CD4-positive, alpha-beta memory T cell (primary cell): ENCODE measurements at regions of chr17 and their contacts with region 1.

Region 1: DNA sequence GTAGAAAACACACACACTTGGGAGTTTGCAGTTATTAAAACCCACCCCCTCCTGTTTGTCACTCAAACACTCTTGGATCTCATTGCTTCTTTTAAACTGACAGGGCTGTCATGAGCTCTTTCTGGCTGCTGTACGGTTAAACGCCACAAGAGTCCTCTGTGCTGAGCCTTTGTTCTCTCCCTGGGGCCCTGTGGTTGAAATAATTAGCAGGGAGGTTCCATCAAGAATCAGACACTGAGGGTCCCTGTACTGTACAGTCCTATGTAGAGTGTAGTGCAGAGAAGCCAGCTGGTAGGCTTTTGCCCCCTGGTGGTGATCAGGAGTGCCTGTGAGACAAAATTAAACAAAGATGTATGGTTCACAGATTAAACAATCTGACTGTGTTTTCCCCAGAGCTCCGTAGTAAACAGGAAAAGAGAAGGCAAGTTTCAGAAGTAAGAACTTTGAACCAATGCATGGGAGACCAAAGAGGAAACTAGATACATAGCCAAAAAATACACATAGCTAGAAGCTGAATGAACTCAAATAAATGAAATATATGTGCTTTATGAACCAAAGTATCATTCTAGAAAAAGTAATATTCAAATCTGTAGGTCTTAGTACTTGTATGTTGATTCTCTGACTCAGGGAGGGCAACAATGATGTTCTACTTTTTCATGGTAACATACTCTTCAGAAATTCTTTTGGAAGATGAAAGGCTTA is 1.4 kb upstream of the SSH2 start:
- DNase-seq: peak; percentile 75 to 85 (median 81)
- H3K4me3 ChIP-seq: no peak overlapping the region
- H3K4me3 Mint-ChIP-seq: no peak overlapping the region
- H3K27ac ChIP-seq: peak overlapping the region; percentile 88
- H3K27ac Mint-ChIP-seq: no peak overlapping the region
- H3K4me1 ChIP-seq: peaks cover 46% of the 10 kb centered on the region
- H3K4me1 Mint-ChIP-seq: peaks cover 15 to 32% (median 29%) of the 10 kb centered on the region in 4 donors
- H3K27me3 ChIP-seq: no peaks in the 10 kb centered on the region
- H3K27me3 Mint-ChIP-seq: no peaks in the 10 kb centered on the region

Region 2: DNA sequence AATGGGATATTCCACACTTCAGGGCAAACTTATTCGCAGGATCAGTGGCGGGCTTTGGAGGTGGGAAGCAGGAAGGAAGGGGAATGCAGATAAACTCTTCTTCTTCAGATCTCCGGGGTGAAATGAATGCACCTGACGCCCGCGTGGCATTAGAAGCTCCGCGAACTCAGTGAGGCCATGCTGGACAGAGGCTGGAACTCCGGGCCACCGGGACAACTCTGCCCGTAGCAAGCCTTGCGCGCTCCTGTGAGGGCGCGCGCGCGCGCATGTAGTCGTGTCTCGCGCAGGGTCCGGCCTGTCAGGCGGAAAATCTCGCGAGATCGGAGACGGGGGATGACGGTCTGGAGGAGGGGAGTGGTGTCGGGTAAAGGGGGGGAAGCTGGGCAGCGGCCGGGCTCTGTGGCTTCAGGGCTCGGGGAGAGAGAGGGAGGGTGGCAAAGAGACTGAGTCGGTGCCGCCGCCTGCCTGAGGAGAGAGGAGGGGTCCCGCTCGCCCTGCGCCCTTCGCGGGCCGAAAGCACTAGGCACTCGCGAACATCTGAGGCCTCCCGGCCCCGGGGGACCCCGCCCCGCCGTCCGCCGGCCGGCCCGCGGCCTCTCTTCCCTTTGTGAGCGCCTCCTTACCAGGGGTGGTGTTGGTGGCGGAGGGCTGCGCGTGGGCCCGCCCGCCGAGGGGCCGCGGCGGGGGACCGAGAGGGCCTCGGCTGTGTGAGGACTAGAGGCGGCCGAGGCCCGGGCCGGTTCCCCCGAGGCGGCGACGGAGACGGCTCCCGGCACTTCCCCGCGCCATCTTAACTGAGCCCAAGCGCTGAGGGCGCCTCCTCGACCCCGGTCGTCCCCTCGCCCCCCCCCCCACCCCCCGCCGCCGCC is 541.2 kb before region 1 on chr17 and contains the start of gene TAOK1:
- CTCF ChIA-PET with region 1: no interaction called
- POLR2A ChIA-PET with region 1: interaction called, 3 read pairs
- intact Hi-C with region 1: loop called (anchors 2 kb)
- DNase-seq: peak; percentile 96 to 98 (median 97)
- H3K4me3 ChIP-seq: peak within 1 kb of the TSS; percentile 89 to 98
- H3K4me3 Mint-ChIP-seq: peak within 1 kb of the TSS; percentile 94 to 99 (median 96)
- H3K27ac ChIP-seq: peak within 1 kb of the TSS; percentile 93
- H3K27ac Mint-ChIP-seq: peak within 1 kb of the TSS; percentile 94 to 98 (median 97)
- H3K4me1 ChIP-seq: peaks cover 45% of the 10 kb centered on the region
- H3K4me1 Mint-ChIP-seq: peaks cover 31 to 50% (median 40%) of the 10 kb centered on the region in 4 donors
- H3K27me3 ChIP-seq: no peaks in the 10 kb centered on the region
- H3K27me3 Mint-ChIP-seq: no peaks in the 10 kb centered on the region
- total RNA-seq, gene TAOK1: 71.2 to 72.0 TPM

Region 3: GRCh38 chr17:29589524-29590410 is 341.6 kb before region 1 on chr17 and contains the start of gene GIT1:
- CTCF ChIA-PET with region 1: interaction called, 5 read pairs
- POLR2A ChIA-PET with region 1: interaction called, 6 read pairs
- intact Hi-C with region 1: loop called (anchors 1 kb)
- DNase-seq: peak; percentile 81 to 86 (median 85)
- H3K4me3 ChIP-seq: peak within 1 kb of the TSS; percentile 61 to 82
- H3K4me3 Mint-ChIP-seq: peak within 1 kb of the TSS; percentile 93 to 97 (median 95)
- H3K27ac ChIP-seq: peak within 1 kb of the TSS; percentile 70
- H3K27ac Mint-ChIP-seq: peak within 1 kb of the TSS; percentile 86 to 97 (median 92)
- H3K4me1 ChIP-seq: peaks cover 82% of the 10 kb centered on the region
- H3K4me1 Mint-ChIP-seq: peaks cover 30 to 71% (median 53%) of the 10 kb centered on the region in 4 donors
- H3K27me3 ChIP-seq: no peaks in the 10 kb centered on the region
- H3K27me3 Mint-ChIP-seq: no peaks in the 10 kb centered on the region
- total RNA-seq, gene GIT1: 78.9 to 82.8 TPM

Region 4: GRCh38 chr17:29740017-29740416 is 191.4 kb before region 1 on chr17:
- CTCF ChIA-PET with region 1: no interaction called
- POLR2A ChIA-PET with region 1: no interaction called
- intact Hi-C with region 1: no loop called
- DNase-seq: no peak
- H3K4me3 ChIP-seq: no peak overlapping the region
- H3K4me3 Mint-ChIP-seq: peak overlapping the region in 4 of 8 donors; percentile 15 to 58 (median 54)
- H3K27ac ChIP-seq: no peak overlapping the region
- H3K27ac Mint-ChIP-seq: peak overlapping the region; percentile 37 to 86 (median 70)
- H3K4me1 ChIP-seq: peaks cover 28% of the 10 kb centered on the region
- H3K4me1 Mint-ChIP-seq: peaks cover 31 to 56% (median 41%) of the 10 kb centered on the region in 4 donors
- H3K27me3 ChIP-seq: no peaks in the 10 kb centered on the region
- H3K27me3 Mint-ChIP-seq: no peaks in the 10 kb centered on the region

Region 5: GRCh38 chr17:29760761-29761696 is 170.4 kb before region 1 on chr17:
- CTCF ChIA-PET with region 1: interaction called, 4 read pairs
- POLR2A ChIA-PET with region 1: interaction called, 13 read pairs
- intact Hi-C with region 1: no loop called
- DNase-seq: peak; percentile 91 to 94 (median 92)
- H3K4me3 ChIP-seq: peak overlapping the region; percentile 37 to 67
- H3K4me3 Mint-ChIP-seq: peak overlapping the region; percentile 92 to 98 (median 94)
- H3K27ac ChIP-seq: peak overlapping the region; percentile 69
- H3K27ac Mint-ChIP-seq: peak overlapping the region; percentile 92 to 98 (median 95)
- H3K4me1 ChIP-seq: peaks cover 41% of the 10 kb centered on the region
- H3K4me1 Mint-ChIP-seq: peaks cover 19 to 57% (median 35%) of the 10 kb centered on the region in 4 donors
- H3K27me3 ChIP-seq: no peaks in the 10 kb centered on the region
- H3K27me3 Mint-ChIP-seq: no peaks in the 10 kb centered on the region

Region 6: DNA sequence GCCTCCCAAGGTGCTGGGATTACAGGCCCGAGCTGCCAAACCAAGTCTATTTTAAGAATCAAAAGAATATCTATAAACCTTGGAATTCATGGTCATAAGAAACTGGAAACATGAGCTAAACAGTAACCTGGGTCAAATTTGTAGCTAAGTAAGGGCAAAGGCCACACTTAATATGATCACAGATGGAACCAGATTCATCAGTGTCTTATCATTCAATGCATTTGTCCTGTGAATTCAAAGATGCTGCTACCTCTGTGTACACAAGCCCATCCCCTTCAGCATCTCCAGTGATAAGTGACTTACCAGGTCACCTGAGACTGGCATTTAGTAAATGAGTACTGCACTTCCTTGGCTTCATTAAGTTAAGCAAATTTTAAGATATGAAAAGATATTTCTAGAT is 109.5 kb before region 1 on chr17:
- CTCF ChIA-PET with region 1: interaction called, 24 read pairs
- POLR2A ChIA-PET with region 1: interaction called, 6 read pairs
- intact Hi-C with region 1: no loop called
- DNase-seq: no peak
- H3K4me3 ChIP-seq: no peak overlapping the region
- H3K4me3 Mint-ChIP-seq: no peak overlapping the region
- H3K27ac ChIP-seq: no peak overlapping the region
- H3K27ac Mint-ChIP-seq: no peak overlapping the region
- H3K4me1 ChIP-seq: no peaks in the 10 kb centered on the region
- H3K4me1 Mint-ChIP-seq: peaks cover 5 to 12% (median 8%) of the 10 kb centered on the region in 4 donors
- H3K27me3 ChIP-seq: no peaks in the 10 kb centered on the region
- H3K27me3 Mint-ChIP-seq: no peaks in the 10 kb centered on the region

Region 7: DNA sequence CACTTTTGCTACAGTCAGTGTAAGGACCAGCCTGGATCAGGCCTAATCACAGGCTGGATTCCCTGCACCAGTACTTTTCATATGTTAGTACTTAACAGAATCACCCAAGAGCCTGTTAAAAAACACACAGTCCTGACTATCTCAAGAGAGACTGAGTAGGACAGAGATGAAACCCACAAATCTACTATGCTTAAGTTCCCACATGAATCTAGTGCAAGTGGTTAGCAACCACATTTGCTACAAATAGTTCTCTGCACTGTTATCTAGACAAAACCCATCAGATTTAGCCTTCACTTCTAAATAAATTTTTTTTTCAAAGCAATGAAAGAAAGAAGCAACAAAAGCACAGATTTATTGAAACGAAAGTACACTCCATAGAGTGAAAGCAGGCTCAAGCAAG is 40.3 kb before region 1 on chr17:
- CTCF ChIA-PET with region 1: interaction called, 9 read pairs
- POLR2A ChIA-PET with region 1: interaction called, 4 read pairs
- intact Hi-C with region 1: loop called (anchors 5 kb)
- DNase-seq: no peak
- H3K4me3 ChIP-seq: no peak overlapping the region
- H3K4me3 Mint-ChIP-seq: no peak overlapping the region
- H3K27ac ChIP-seq: no peak overlapping the region
- H3K27ac Mint-ChIP-seq: no peak overlapping the region
- H3K4me1 ChIP-seq: no peaks in the 10 kb centered on the region
- H3K4me1 Mint-ChIP-seq: peaks cover 13 to 32% (median 27%) of the 10 kb centered on the region in 4 donors
- H3K27me3 ChIP-seq: no peaks in the 10 kb centered on the region
- H3K27me3 Mint-ChIP-seq: no peaks in the 10 kb centered on the region

Region 8: DNA sequence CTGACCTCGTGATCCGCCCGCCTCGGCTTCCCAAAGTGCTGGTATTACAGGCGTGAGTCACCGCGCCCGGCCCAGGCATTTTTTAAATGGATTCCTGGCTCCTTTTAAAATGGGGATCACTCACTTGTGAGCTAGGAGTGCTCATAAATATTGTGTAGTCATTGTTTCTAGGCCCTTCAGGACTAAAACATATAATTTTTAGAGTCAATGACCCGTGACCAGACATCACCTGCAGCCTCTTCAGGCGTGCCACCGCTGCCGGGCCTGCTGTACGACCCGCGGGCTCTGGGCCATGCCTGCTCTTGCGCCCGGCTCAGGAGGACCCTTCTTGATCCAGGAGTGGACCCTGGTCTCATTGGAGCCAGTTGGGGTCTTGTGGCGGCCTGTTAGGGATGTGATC is 40.9 kb after region 1 on chr17:
- CTCF ChIA-PET with region 1: no interaction called
- POLR2A ChIA-PET with region 1: no interaction called
- intact Hi-C with region 1: no loop called
- DNase-seq: no peak
- H3K4me3 ChIP-seq: no peak overlapping the region
- H3K4me3 Mint-ChIP-seq: no peak overlapping the region
- H3K27ac ChIP-seq: no peak overlapping the region
- H3K27ac Mint-ChIP-seq: no peak overlapping the region
- H3K4me1 ChIP-seq: no peaks in the 10 kb centered on the region
- H3K4me1 Mint-ChIP-seq: no peaks in the 10 kb centered on the region
- H3K27me3 ChIP-seq: no peaks in the 10 kb centered on the region
- H3K27me3 Mint-ChIP-seq: no peaks in the 10 kb centered on the region

Region 9: DNA sequence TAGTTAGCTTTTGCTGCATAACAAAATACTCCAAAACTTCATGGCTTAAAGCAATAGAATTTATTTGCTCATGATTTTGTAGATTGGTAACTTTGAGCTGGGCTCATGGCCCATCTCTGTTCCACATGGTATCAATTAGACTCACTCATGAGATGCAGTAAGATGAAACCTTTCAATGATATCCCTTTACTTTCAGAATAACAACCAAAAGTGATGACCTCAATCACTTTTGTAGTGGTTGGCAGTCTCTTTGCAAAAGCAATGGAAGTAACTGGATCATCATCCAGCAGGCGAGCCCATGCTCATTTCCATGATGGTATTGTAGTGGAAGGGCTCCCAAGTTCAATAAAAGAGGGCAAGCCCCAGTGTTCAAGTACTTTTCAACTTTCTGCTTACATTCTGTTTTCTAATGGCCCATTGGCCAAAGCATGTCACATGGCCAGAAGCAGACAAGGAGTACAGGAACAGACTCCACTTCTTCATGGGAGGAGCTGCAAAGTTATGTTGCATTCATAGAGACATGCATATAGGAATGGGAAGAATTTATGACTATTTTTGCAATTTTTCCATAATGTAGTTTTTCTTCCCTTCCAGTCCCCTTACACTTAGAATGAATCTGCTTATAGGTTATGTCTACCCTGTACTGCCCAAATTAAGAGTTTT is 51.7 kb after region 1 on chr17:
- CTCF ChIA-PET with region 1: no interaction called
- POLR2A ChIA-PET with region 1: no interaction called
- intact Hi-C with region 1: no loop called
- DNase-seq: no peak
- H3K4me3 ChIP-seq: no peak overlapping the region
- H3K4me3 Mint-ChIP-seq: no peak overlapping the region
- H3K27ac ChIP-seq: no peak overlapping the region
- H3K27ac Mint-ChIP-seq: no peak overlapping the region
- H3K4me1 ChIP-seq: no peaks in the 10 kb centered on the region
- H3K4me1 Mint-ChIP-seq: no peaks in the 10 kb centered on the region
- H3K27me3 ChIP-seq: no peaks in the 10 kb centered on the region
- H3K27me3 Mint-ChIP-seq: peaks cover 3 to 6% of the 10 kb centered on the region in 2 donors

Region 10: GRCh38 chr17:30021708-30022317 is 90.4 kb after region 1 on chr17:
- CTCF ChIA-PET with region 1: interaction called, 10 read pairs
- POLR2A ChIA-PET with region 1: no interaction called
- intact Hi-C with region 1: loop called (anchors 1 kb)
- DNase-seq: peak; percentile 25 to 53 (median 48)
- H3K4me3 ChIP-seq: no peak overlapping the region
- H3K4me3 Mint-ChIP-seq: no peak overlapping the region
- H3K27ac ChIP-seq: no peak overlapping the region
- H3K27ac Mint-ChIP-seq: no peak overlapping the region
- H3K4me1 ChIP-seq: no peaks in the 10 kb centered on the region
- H3K4me1 Mint-ChIP-seq: peaks cover 0 to 2% (median under 1%) of the 10 kb centered on the region in 4 donors
- H3K27me3 ChIP-seq: peaks cover 2% of the 10 kb centered on the region
- H3K27me3 Mint-ChIP-seq: peaks cover 0 to 2% of the 10 kb centered on the region in 2 donors